Activated B cell treated with CpG ODN at 0.5 μM for 24 hours (primary cell): ENCODE measurements at regions of chr17 and their contacts with region 1.

Region 1: GRCh38 chr17:2386400-2387085 is 14.3 kb downstream of the MNT start:
- DNase-seq: no peak
- ATAC-seq: no peak
- H3K4me3 Mint-ChIP-seq: no peak overlapping the region
- H3K27ac Mint-ChIP-seq: no peak overlapping the region
- H3K4me1 Mint-ChIP-seq: peaks cover 14% of the 10 kb centered on the region
- H3K27me3 Mint-ChIP-seq: no peaks in the 10 kb centered on the region
- CTCF ChIP-seq: no peak

Region 2: DNA sequence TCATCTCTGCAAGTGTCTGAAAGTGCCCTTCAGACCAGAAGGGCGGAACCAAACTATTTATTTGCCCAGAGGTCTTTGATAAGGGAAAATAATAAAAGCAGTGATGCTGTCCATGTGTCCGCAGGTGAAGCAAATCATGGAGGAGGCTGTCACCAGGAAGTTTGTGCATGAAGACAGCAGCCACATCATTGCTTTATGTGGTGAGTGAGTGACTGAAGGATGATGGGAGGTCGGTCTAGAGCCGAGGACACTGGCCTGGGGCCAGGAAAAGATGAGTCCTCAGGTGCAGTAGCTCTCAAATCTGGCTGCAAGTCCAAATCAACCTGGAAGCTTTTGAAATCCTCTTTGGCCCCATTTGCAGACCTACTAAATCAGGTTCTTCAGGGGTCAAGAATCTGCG is 43.1 kb before region 1 on chr17:
- CTCF ChIA-PET with region 1: no interaction called
- POLR2A ChIA-PET with region 1: no interaction called
- intact Hi-C with region 1: no loop called
- DNase-seq: no peak
- ATAC-seq: no peak
- H3K4me3 Mint-ChIP-seq: no peak overlapping the region
- H3K27ac Mint-ChIP-seq: no peak overlapping the region
- H3K4me1 Mint-ChIP-seq: peaks cover 1% of the 10 kb centered on the region
- H3K27me3 Mint-ChIP-seq: no peaks in the 10 kb centered on the region
- CTCF ChIP-seq: no peak

Region 3: DNA sequence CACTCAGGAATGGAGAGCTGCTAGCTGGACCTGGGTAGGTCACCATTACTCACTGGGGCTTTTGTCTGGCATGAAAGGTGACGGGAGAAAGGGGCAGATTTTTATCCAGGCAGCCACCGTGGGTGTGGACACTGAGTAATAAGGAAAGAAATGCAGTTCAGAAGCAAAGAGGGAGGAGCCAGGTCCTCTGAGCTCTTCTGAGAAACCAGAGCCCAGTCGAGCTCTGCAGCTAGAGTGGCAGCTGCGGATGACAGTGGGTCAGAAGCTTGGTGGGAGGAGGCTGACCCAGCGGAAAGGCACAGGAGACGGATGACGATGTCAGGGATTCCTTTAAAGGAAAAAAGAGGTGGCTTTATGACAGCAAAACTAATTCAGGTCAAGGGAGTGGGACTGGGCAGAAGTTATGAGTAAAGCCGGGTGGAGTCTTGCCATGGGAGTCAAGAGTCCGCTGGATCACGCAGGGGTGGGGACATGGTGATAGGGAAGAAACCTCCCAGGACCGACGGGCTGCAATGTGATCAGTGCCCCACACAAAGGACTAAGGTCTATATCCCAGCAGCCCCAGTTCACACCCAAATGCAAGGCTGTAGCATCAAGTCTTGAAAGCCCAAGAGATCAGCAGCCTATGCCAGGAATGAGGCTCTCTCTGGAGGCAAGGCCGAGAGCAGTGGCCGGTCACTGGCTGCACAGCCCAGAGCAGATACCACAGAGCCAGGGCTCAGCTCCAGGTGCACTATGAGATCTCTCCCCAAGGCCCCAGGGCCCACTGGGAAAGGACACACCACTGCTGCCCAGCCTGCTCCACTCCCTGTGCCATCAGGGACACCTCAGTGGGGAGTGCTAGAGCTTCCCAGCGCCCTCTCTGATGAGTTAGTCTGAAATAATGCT is 20.6 kb after region 1 on chr17:
- CTCF ChIA-PET with region 1: interaction called, 520 read pairs
- POLR2A ChIA-PET with region 1: interaction called, 103 read pairs
- intact Hi-C with region 1: no loop called
- DNase-seq: no peak
- ATAC-seq: no peak
- H3K4me3 Mint-ChIP-seq: no peak overlapping the region
- H3K27ac Mint-ChIP-seq: no peak overlapping the region
- H3K4me1 Mint-ChIP-seq: peaks cover 8% of the 10 kb centered on the region
- H3K27me3 Mint-ChIP-seq: no peaks in the 10 kb centered on the region
- CTCF ChIP-seq: no peak

Region 4: DNA sequence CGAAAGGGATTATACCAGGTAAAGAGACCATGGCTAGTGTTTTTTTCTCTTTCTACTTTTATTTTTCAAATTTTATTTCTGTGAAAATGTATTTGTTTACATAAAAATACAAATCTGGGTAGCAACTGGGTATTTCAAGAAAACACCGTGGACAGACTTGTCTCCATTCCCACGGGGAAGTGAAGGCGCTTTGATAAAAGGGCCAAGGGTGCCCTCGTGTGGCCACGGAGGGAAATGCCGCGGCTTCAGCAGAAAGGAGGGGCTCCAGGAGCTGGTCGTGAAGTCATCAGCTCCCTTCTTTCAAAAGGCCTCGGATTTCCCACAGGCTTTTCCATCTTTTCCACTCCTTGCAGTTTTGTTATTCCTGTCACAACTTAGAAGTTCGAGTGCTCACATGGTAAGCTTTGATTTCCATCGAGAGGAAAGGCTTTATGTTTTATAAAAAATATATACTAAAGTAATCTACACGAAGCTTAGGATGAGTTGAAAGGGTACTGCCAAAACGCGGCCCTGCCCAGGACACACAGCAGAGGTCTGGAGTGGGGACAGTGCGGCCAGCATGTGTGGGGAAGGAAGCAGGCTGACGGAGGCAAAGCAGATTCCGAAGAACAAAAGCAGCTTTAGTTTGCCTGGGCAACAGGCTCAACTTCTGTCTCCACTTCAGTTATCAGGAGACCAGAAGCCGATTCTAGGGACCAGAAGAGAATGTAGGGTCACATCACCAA is 29.6 kb after region 1 on chr17:
- CTCF ChIA-PET with region 1: interaction called, 520 read pairs
- POLR2A ChIA-PET with region 1: interaction called, 29 read pairs
- intact Hi-C with region 1: loop called (anchors 1 kb)
- DNase-seq: peak; percentile 84
- ATAC-seq: peak; percentile 83
- H3K4me3 Mint-ChIP-seq: no peak overlapping the region
- H3K27ac Mint-ChIP-seq: no peak overlapping the region
- H3K4me1 Mint-ChIP-seq: no peaks in the 10 kb centered on the region
- H3K27me3 Mint-ChIP-seq: no peaks in the 10 kb centered on the region
- CTCF ChIP-seq: peak; percentile 47

Region 5: DNA sequence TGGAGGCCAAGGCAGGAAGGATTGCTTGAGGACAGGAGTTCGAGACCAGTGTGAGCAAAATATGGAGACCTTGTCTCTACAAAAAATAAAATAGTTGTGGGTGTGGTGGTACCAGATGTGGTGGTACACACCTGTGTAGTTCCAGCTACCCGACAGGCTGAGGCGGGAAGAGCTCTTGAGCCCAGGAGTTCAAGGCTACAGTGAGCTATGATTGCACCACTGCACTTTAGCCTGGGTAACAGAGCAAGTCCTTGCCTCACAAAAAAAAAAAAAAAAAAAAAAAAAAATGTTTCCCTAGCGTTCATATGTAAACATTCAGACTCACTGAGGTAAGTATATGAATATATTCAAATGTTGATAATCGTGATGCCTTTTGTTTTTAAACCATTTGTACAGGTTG is 285.5 kb after region 1 on chr17:
- CTCF ChIA-PET with region 1: interaction called, 17 read pairs
- POLR2A ChIA-PET with region 1: no interaction called
- intact Hi-C with region 1: loop called (anchors 2 kb)
- DNase-seq: no peak
- ATAC-seq: no peak
- H3K4me3 Mint-ChIP-seq: no peak overlapping the region
- H3K27ac Mint-ChIP-seq: no peak overlapping the region
- H3K4me1 Mint-ChIP-seq: peaks cover 2% of the 10 kb centered on the region
- H3K27me3 Mint-ChIP-seq: no peaks in the 10 kb centered on the region
- CTCF ChIP-seq: no peak

Region 6: GRCh38 chr17:2680961-2681360 is 294.4 kb after region 1 on chr17:
- CTCF ChIA-PET with region 1: interaction called, 17 read pairs
- POLR2A ChIA-PET with region 1: no interaction called
- intact Hi-C with region 1: no loop called
- DNase-seq: no peak
- ATAC-seq: no peak
- H3K4me3 Mint-ChIP-seq: no peak overlapping the region
- H3K27ac Mint-ChIP-seq: no peak overlapping the region
- H3K4me1 Mint-ChIP-seq: no peaks in the 10 kb centered on the region
- H3K27me3 Mint-ChIP-seq: no peaks in the 10 kb centered on the region
- CTCF ChIP-seq: no peak